Sigmoid colon (tissue), 7 donors: ENCODE measurements at regions of chr11 and their contacts with region 1.

Region 1: DNA sequence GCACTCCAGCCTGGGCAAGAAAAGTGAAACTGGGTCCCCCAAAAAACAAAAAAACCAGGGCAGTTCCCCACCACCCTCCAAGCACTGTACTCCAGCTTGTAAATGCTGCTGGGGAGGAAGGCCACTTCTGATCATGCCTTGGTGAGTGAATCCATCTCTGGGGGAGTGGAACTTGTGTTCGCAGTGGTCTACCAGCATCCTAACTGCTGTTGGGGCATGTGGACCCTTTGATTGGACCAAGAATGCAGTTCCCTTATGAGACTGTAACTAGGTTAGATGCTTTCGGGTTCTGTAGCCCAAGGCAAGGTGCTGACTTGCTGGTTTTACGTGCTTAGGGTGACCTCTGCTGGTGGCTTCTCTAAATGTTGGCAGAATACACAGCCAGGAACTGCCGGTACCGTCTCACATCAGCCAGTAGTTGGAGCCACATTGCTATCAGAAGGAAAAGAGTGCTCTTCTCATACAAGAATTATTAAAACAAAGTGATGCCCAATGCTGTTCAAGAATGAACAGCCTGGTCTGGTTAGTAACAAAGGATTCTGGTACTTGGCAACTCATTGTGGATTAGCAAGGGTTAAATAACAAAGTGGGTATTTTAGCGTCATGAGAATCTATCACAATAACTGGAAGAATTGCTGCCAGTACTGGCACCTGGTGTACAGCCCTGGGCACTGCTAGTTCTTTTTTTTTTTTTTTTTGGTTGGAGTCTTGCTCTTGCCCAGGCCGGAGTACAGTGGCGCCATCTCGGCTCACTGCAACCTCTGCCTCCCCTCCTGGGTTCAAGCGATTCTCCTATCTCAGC is 13.0 kb downstream of the EIF1AD start:
- DNase-seq: peak; percentile 94
- H3K4me3 ChIP-seq: no peak overlapping the region
- H3K27ac ChIP-seq: peak overlapping the region in 3 of 4 donors; percentile 25 to 38 (median 31)
- H3K4me1 ChIP-seq: no peaks in the 10 kb centered on the region
- H3K27me3 ChIP-seq: no peaks in the 10 kb centered on the region
- CTCF ChIP-seq: peak; percentile 87 to 98 (median 94)
- EP300 ChIP-seq: no peak
- POLR2A ChIP-seq: no peak

Region 2: DNA sequence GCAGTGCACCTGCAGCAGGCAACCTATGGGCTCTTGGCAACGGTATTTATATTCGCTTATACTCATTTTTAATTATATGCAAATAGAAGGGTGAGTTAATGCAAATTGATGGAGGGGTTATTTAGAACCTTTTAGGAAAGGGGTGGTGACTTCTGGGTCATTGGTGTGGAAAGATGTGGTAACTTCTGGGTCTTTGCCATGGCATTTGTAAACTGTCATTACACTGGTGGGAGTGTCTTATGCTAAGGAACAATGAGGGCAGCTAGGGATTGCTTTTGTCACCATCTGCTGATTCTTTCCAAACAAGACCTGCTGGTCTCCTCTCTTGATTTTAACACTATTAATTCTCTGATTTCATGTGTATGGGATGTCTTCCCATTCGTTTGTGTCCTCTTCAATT is 288.6 kb before region 1 on chr11:
- intact Hi-C with region 1: loop called (anchors 10 kb)
- DNase-seq: no peak
- H3K4me3 ChIP-seq: no peak overlapping the region
- H3K27ac ChIP-seq: no peak overlapping the region
- H3K4me1 ChIP-seq: peaks cover 0 to 8% (median 7%) of the 10 kb centered on the region in 4 donors
- H3K27me3 ChIP-seq: no peaks in the 10 kb centered on the region
- CTCF ChIP-seq: no peak
- EP300 ChIP-seq: no peak
- POLR2A ChIP-seq: no peak

Region 3: DNA sequence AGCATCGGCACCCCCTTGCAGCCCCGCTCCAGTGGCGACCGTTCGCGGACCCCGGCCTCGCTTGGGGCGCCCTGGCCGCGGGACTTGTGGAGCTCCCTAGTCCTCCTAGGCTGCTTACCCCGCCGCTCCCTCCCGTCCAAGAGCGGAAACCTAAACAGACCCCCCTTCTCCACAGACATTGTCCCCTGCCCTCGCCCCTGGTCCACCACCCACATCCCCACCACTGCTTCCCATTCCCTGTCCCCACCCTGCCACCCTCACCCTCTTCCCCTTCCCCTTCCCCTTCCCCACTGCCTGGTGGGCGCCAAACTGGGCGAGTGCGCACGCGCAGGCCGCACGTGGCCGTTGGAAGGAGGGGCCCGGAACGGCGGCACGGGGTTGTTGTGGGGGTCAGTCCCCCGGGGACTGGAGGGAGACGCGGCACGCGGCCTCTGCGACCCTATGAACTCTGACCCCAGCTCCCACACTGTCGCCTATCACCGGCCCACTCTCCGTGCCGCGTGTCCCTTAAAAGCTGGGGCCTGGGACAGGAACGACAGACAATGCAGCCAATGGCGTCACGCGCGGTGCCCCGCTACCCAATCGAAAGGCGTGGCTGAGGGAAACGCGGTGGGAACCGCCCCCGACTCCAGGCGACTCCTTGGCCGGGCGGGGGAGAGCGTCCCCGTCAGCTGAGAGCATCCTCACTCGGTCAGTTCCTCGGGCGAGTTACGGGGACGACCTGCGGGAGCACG is 155.5 kb before region 1 on chr11 and contains the start of gene SNX32:
- intact Hi-C with region 1: no loop called
- DNase-seq: peak; percentile 97
- H3K4me3 ChIP-seq: peak within 1 kb of the TSS; percentile 36 to 65 (median 58)
- H3K27ac ChIP-seq: peak within 1 kb of the TSS; percentile 23 to 56 (median 51)
- H3K4me1 ChIP-seq: peaks cover 0 to 21% (median 16%) of the 10 kb centered on the region in 4 donors
- H3K27me3 ChIP-seq: no peaks in the 10 kb centered on the region
- CTCF ChIP-seq: no peak
- EP300 ChIP-seq: no peak
- POLR2A ChIP-seq: no peak
- total RNA-seq, gene SNX32: 0.27 to 1.2 (median 0.63) TPM

Region 4: DNA sequence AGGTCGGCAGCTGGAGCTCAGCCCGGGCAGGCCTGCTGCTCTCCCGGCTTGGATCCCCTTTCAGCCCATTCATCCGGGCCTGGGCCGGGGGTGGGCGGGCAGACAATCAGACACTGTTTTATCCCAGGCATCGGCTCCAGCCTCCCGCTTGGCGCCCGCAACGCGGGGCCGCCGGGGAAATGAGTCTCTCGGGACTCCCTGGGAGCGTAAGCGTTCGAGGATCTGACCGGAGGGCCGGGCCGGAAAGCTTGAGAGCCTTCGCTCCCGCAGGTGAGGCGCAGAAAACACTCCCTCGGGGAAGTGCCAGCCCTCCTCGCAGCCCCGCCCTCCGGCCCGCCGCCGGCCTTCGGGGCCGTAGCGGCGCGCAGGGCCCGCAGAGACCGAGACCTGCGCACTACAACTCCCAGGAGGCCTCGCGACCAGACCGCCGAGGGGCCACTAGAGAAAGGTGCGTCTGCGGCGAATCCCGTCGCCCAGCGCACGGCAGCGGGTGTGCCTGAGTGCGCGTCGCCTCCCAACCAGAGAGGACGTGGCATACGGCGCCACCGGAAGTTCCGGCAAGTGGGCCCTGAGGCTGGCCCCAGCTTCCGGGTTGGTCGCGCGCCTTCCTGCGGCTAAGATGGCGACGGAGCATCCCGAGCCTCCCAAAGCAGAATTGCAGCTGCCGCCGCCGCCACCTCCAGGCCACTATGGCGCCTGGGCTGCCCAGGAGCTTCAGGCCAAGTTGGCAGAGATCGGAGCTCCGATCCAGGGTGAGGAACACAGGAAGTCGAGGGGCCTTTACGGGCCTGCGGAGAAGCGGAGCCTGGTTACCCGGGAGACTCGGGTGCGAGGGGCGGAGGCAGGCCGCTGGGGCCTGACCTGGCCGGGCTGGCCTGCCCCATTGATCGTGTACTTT is 63.0 kb after region 1 on chr11 and contains the start of gene SF3B2:
- intact Hi-C with region 1: no loop called
- DNase-seq: peak; percentile 99
- H3K4me3 ChIP-seq: peak within 1 kb of the TSS; percentile 85 to 98 (median 91)
- H3K27ac ChIP-seq: peak within 1 kb of the TSS; percentile 84 to 90 (median 87)
- H3K4me1 ChIP-seq: peaks cover 0 to 33% (median 23%) of the 10 kb centered on the region in 4 donors
- H3K27me3 ChIP-seq: peaks cover 14 to 26% (median 21%) of the 10 kb centered on the region in 3 donors
- CTCF ChIP-seq: no peak
- EP300 ChIP-seq: no peak
- POLR2A ChIP-seq: peak; percentile 48 to 50
- total RNA-seq, gene SF3B2: 75.5 to 122 (median 102) TPM

Region 5: GRCh38 chr11:66136752-66137123 is 147.7 kb after region 1 on chr11:
- intact Hi-C with region 1: no loop called
- DNase-seq: no peak
- H3K4me3 ChIP-seq: no peak overlapping the region
- H3K27ac ChIP-seq: no peak overlapping the region
- H3K4me1 ChIP-seq: peaks cover 0 to 13% (median 4%) of the 10 kb centered on the region in 4 donors
- H3K27me3 ChIP-seq: no peaks in the 10 kb centered on the region
- CTCF ChIP-seq: no peak
- EP300 ChIP-seq: no peak
- POLR2A ChIP-seq: no peak